ENCODE measurements at regions of chr20 and their contacts with region 1.

Region 1: GRCh38 chr20:25696384-25697131 is at the start of gene ZNF337:
- DNase-seq: peak; percentile 92 to 93
- ATAC-seq: peak; percentile 97
- H3K4me3 ChIP-seq: peak within 1 kb of the TSS; percentile 86 to 95 (median 92)
- H3K27ac ChIP-seq: peak within 1 kb of the TSS; percentile 80 to 92 (median 84)
- H3K4me1 ChIP-seq: peaks cover 8 to 11% of the 10 kb centered on the region in 2 donors
- H3K27me3 ChIP-seq: no peaks in the 10 kb centered on the region
- CTCF ChIP-seq: peak in 1 of 5 experiments; percentile 8
- POLR2A ChIP-seq: peak; percentile 73 to 83
- total RNA-seq, gene ZNF337: 7.1 to 9.4 (median 8.0) TPM

Region 2: GRCh38 chr20:25065625-25066338 is 630.8 kb before region 1 on chr20:
- in situ Hi-C with region 1: loop called in 1 of 4 experiments (anchors 25 kb)
- intact Hi-C with region 1: no loop called
- DNase-seq: peak in 1 of 2 donors; percentile 54
- ATAC-seq: peak; percentile 88 to 93
- H3K4me3 ChIP-seq: no peak overlapping the region
- H3K27ac ChIP-seq: no peak overlapping the region
- H3K4me1 ChIP-seq: peaks cover 0 to 3% of the 10 kb centered on the region in 2 donors
- H3K27me3 ChIP-seq: peaks cover 0 to 3% (median 0%) of the 10 kb centered on the region in 3 donors
- CTCF ChIP-seq: peak; percentile 83 to 91 (median 86)
- POLR2A ChIP-seq: no peak

Region 3: DNA sequence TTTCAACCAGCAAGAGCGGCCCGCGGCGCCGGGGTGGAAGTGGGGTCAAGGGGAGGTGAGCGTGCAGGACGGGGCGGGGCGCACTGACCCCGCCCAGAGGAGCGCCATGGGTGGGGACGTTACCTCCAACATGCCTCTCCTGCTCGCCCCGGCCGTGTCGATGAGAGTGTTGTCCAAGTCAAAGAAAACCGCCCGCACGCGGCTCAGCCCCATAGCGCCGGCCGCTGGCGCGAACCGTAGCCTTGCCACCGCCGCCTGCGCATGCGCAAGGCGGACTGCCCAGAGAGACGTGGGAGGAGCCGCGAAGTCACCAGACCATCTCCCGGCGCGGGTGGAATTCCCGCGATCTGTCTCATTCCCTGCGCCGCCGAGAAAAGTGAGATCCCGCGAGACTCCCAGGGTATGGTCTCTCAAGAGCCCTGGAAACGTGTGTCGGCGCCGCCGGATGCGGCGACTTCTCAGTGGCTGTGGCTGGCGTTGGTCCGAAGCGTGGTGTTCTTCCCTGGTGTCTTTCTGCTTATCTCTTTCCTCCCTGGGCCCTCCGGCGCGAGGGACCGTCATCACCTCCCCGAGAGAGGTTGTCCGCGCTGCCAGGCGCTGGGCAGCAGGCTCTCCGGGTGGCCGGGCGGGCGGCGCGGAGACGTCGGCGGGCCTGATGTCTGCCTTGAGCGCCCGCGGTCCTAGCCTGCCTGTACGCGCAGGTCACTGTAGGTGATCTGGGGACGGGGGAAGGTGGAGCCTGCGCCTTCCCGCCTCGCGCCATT is 72.6 kb before region 1 on chr20 and contains the start of gene NANP:
- in situ Hi-C with region 1: loop called in 2 of 4 experiments (anchors 5 kb)
- intact Hi-C with region 1: loop called (anchors 2 kb)
- DNase-seq: peak; percentile 91 to 95
- ATAC-seq: peak; percentile 95 to 96
- H3K4me3 ChIP-seq: peak within 1 kb of the TSS; percentile 72 to 95 (median 85)
- H3K27ac ChIP-seq: peak within 1 kb of the TSS; percentile 87 to 93 (median 92)
- H3K4me1 ChIP-seq: peaks cover 10 to 11% of the 10 kb centered on the region in 2 donors
- H3K27me3 ChIP-seq: no peaks in the 10 kb centered on the region
- CTCF ChIP-seq: peak in 1 of 5 experiments; percentile 3
- POLR2A ChIP-seq: peak; percentile 75 to 79
- total RNA-seq, gene NANP: 1.5 to 3.6 (median 2.6) TPM

Region 4: GRCh38 chr20:25629816-25630499 is 66.6 kb before region 1 on chr20:
- in situ Hi-C with region 1: loop called in 1 of 4 experiments (anchors 5 kb)
- intact Hi-C with region 1: no loop called
- DNase-seq: no peak
- ATAC-seq: no peak
- H3K4me3 ChIP-seq: no peak overlapping the region
- H3K27ac ChIP-seq: no peak overlapping the region
- H3K4me1 ChIP-seq: no peaks in the 10 kb centered on the region
- H3K27me3 ChIP-seq: no peaks in the 10 kb centered on the region
- CTCF ChIP-seq: no peak
- POLR2A ChIP-seq: no peak

Region 5: DNA sequence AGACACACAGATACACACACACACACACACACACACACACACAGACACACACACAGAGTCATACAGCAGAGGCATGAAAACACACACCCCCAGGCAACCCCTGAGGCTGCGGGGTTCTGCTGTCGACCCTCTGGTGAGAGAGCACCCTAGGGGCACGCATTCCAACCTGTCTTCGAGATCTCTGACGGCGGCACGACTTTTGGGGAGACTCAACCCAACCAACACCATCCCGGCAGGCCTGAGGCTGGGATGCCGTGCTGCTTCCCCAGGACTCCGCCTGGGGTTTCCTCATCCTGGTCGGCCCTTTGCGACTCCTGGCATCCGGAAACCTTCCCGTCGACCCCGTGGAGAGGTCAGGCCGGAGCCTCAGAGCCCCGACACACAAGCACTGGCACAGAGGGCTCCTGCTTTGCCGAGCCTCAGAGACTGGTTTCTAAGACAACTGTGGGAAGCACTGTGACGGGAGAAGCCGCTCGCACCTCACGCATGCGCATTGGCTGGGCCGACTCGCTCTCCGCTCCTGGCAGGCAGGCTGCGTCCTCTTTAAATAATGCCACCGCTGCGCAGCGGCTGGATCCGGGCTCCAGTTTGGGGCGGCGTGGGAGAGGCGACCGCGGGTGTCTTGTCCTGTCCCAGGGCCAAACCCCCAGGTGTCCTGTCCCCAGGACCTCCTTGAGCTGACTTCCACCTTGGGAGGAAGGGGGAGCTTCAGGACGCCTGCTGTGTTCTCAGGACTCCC is 169.0 kb after region 1 on chr20:
- in situ Hi-C with region 1: loop called in 3 of 4 experiments (anchors 25 kb)
- intact Hi-C with region 1: loop called (anchors 2 kb)
- DNase-seq: peak; percentile 40 to 53
- ATAC-seq: no peak
- H3K4me3 ChIP-seq: peak overlapping the region; percentile 48 to 68 (median 53)
- H3K27ac ChIP-seq: no peak overlapping the region
- H3K4me1 ChIP-seq: peaks cover 20 to 39% of the 10 kb centered on the region in 2 donors
- H3K27me3 ChIP-seq: no peaks in the 10 kb centered on the region
- CTCF ChIP-seq: no peak
- POLR2A ChIP-seq: no peak